HEK293T (cell line): ENCODE measurements at regions of chr14 and their contacts with region 1.

Region 1: DNA sequence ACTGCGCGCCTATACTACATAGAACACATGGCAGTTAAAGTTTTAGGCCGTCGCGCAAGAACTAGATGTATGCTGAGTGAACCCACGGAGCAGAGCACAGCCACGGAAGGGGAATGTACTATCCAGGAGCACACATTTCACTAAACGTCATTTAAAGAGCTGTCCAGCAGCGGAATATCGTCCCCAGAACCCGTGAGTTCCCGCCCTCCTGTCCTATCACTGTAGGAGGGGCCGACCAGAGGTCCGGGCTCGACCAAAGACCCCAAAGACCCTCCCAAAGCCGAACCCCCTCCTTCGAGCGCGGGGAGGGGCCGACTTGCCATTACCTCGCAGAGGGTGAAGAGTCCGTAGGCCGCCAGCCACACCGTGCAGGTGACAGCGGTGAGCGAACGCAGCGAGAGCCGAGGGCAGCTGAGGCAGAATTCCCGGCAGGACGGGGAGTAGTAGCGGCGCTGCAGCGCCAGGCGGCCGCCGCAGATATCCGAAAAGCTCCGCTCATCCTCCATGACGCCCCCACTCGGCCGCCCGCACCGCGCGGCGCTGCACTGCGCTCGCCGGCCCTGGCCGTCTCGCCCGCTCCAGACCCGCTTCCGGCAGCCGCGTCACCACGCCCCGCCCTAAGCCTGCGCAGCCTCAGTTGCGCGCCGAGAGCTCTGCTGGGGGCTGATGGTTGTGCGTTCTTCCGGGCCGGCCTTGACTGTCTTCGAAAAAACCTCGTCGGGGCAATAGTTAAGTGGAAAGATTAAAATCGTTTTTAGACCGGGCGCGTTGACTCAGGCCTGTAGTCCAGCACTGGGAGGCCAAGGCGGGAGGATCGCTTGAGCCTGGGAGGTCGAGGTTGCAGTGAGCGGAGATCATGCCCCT is at the start of gene PIGH:
- DNase-seq: peak; percentile 95

Region 2: GRCh38 chr14:67571272-67571850 is 28.6 kb before region 1 on chr14:
- CTCF ChIA-PET with region 1: no interaction called
- POLR2A ChIA-PET with region 1: interaction called, 11 read pairs
- DNase-seq: peak; percentile 72

Region 3: GRCh38 chr14:67589204-67589770 is 10.6 kb before region 1 on chr14:
- CTCF ChIA-PET with region 1: interaction called, 8 read pairs
- POLR2A ChIA-PET with region 1: interaction called, 20 read pairs
- DNase-seq: no peak

Region 4: GRCh38 chr14:67619446-67620216 is 19.7 kb after region 1 on chr14 and contains the start of gene ARG2:
- CTCF ChIA-PET with region 1: interaction called, 8 read pairs
- POLR2A ChIA-PET with region 1: interaction called, 21 read pairs
- DNase-seq: peak; percentile 96

Region 5: DNA sequence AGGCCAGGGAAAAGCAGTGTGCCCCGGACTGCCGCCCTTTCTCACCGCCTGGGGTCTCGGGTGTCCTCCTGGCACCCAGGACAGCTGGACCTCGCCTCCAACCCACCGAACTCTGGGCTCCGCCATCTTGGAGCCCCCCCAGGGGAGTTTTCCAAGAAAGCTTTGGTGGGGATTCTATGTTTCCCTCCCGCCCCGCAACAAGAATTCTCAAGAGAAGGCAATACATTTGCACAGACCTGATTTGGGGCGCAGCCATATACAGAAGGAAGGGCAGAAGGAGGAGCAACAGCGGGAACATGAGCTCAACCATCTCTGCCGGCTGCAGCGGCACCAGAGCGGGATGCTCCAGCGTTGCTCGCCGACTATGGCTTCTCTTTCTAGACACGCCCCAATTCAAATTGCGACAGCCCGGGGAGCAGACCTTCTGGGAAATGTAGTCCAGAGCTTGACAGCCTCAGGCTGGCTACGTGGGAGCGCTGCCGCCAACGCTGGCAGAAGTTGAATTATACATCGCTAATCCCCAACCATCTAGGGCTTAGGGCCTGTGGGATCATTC is 95.5 kb after region 1 on chr14 and contains the start of gene RDH11:
- CTCF ChIA-PET with region 1: no interaction called
- POLR2A ChIA-PET with region 1: interaction called, 13 read pairs
- DNase-seq: peak; percentile 90